ENCODE measurements at regions of chr2 and their contacts with region 1.

Region 1: GRCh38 chr2:160075171-160075570 is 12.8 kb upstream of the PLA2R1 start:
- DNase-seq: peak; percentile 98
- H3K4me3 Mint-ChIP-seq: peak overlapping the region; percentile 22
- H3K27ac Mint-ChIP-seq: no peak overlapping the region
- H3K4me1 Mint-ChIP-seq: no peaks in the 10 kb centered on the region
- H3K27me3 Mint-ChIP-seq: no peaks in the 10 kb centered on the region
- CTCF ChIP-seq: no peak

Region 2: GRCh38 chr2:160033732-160034392 is 41.3 kb before region 1 on chr2:
- CTCF ChIA-PET with region 1: no interaction called
- POLR2A ChIA-PET with region 1: no interaction called
- intact Hi-C with region 1: no loop called
- DNase-seq: peak; percentile 67
- H3K4me3 Mint-ChIP-seq: no peak overlapping the region
- H3K27ac Mint-ChIP-seq: peak overlapping the region; percentile 4
- H3K4me1 Mint-ChIP-seq: peaks cover 18% of the 10 kb centered on the region
- H3K27me3 Mint-ChIP-seq: no peaks in the 10 kb centered on the region
- CTCF ChIP-seq: no peak

Region 3: DNA sequence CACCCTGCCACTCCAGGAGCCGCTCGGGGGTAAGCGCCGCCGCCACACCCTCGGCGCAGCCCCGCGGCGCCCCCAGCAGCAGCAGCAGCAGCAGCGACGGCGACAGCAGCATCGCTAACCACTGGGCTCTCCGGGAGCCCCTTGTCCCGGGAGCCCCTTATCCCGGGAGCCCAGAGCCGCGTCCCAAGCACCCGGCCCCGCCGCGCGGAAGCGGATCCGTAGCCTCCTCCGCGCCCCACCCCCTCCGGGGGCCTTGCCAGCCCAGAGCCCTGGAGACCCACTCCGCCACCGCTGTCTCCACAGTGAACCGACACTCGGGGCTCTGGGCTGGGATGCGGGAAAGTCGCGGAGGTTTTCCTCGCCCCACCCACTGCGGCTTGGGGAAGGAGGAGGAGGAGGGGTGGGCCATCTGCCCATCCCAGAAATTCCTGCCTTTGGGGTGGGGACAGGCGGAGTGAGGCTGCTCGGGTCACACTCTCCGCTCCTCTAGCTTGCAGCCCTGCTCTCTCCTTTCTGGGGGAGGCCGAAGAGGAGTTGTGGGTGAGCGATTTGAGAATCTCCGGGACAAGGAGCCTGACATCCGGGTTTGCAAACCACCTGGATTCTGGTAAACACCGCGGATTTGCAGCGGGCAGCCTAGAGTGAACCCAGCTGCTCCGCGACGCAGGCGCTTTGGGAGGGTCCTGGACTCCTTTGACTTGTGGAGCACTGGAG is 12.7 kb before region 1 on chr2 and contains the start of gene PLA2R1:
- CTCF ChIA-PET with region 1: interaction called, 10 read pairs
- POLR2A ChIA-PET with region 1: interaction called, 7 read pairs
- intact Hi-C with region 1: no loop called
- DNase-seq: peak; percentile 58
- H3K4me3 Mint-ChIP-seq: peak within 1 kb of the TSS; percentile 82
- H3K27ac Mint-ChIP-seq: peak within 1 kb of the TSS; percentile 78
- H3K4me1 Mint-ChIP-seq: peaks cover 22% of the 10 kb centered on the region
- H3K27me3 Mint-ChIP-seq: no peaks in the 10 kb centered on the region
- CTCF ChIP-seq: no peak
- total RNA-seq, gene PLA2R1: 7.5 and 8.4 TPM in 2 replicates

Region 4: DNA sequence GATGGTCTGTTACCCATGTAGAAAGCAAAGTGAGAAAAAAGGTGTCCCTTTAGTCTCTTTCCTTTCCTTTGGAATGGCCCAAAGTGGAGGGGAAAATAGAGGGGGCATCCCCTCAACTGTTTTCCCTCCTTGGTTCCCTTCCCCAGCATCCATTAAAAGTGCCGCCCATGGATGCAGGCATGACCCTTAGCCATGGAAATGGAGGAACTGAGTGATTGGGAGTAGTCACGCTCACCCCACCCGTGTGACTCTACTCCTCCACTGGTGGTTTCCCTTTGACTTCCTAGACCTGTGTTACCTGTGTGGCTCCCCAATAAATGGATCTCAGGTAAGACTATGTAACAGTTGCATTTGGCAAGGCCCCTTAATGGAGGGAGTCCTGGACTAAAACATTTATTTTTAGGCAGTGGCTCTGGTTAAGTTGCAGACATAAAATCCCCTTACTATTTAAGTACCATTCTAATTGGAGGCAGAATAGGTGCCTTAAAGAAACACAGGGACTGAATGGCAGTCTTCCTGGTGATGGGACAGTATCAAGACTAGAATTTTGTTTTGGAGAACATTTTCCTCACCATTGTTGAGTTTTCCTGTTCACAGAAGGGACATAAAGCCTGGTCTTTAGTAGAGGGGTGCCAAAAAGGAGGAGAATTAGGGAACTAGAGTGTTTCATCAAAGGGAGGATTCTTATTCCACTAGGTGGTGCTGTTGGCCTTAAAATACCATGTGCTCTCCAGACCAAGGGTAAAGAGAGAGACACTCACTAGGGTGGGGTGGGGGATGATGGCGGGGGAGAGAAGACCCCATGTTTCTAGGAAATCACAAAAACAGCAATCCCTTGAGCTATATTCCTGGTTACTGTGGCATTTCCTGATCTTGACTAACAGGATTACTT is 12.9 kb after region 1 on chr2:
- CTCF ChIA-PET with region 1: interaction called, 5 read pairs
- POLR2A ChIA-PET with region 1: interaction called, 19 read pairs
- intact Hi-C with region 1: no loop called
- DNase-seq: peak; percentile 64
- H3K4me3 Mint-ChIP-seq: no peak overlapping the region
- H3K27ac Mint-ChIP-seq: no peak overlapping the region
- H3K4me1 Mint-ChIP-seq: peaks cover 13% of the 10 kb centered on the region
- H3K27me3 Mint-ChIP-seq: no peaks in the 10 kb centered on the region
- CTCF ChIP-seq: peak; percentile 24

Region 5: DNA sequence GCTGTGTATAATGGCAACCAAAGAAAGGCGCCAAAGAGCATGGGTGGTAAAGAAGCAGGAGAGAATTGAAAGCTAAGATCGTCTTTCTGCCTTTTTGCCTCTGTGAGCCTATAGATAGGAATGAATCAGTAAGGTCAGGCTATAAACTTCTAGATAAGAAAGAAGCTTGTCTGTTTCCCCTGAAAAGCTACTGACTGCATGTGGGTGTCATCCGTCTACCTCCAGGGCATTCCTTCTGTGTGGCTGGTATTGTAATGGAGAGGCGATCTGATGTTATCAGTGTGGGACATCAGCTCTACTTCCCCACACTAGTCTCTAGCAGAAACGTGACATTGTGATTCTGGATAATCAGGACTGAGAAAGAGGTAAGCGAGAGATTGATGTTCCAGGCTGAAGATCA is 50.7 kb after region 1 on chr2:
- CTCF ChIA-PET with region 1: no interaction called
- POLR2A ChIA-PET with region 1: no interaction called
- intact Hi-C with region 1: no loop called
- DNase-seq: no peak
- H3K4me3 Mint-ChIP-seq: no peak overlapping the region
- H3K27ac Mint-ChIP-seq: no peak overlapping the region
- H3K4me1 Mint-ChIP-seq: no peaks in the 10 kb centered on the region
- H3K27me3 Mint-ChIP-seq: no peaks in the 10 kb centered on the region
- CTCF ChIP-seq: no peak